ENCODE measurements at regions of chr16 and their contacts with region 1.

Region 1: DNA sequence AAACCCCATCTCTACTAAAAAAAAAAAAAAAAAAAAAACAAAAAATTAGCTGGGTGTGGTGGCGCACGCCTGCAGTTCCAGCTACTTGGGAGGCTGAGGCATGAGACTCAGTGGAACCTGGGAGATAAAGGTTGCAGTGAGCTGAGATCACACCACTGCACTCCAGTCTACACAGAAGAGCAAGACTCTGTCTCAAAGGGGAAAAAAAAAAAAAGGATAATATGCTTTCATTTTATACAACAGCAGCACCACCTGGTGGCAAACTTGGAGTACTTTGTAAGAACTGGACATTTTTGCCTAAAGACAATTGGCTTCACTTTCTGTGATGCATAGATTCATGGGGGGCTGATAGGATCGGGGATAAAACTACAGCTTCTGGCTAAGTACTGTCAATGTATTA is 8.5 kb downstream of the CHTF8 start:
- DNase-seq: peak; percentile 50
- H3K4me3 Mint-ChIP-seq: no peak overlapping the region
- H3K27ac Mint-ChIP-seq: no peak overlapping the region
- H3K4me1 Mint-ChIP-seq: peaks cover 9% of the 10 kb centered on the region
- H3K27me3 Mint-ChIP-seq: no peaks in the 10 kb centered on the region

Region 2: GRCh38 chr16:68902008-68902968 is 221.6 kb before region 1 on chr16:
- intact Hi-C with region 1: loop called (anchors 1 kb)
- DNase-seq: no peak
- H3K4me3 Mint-ChIP-seq: no peak overlapping the region
- H3K27ac Mint-ChIP-seq: no peak overlapping the region
- H3K4me1 Mint-ChIP-seq: no peaks in the 10 kb centered on the region
- H3K27me3 Mint-ChIP-seq: no peaks in the 10 kb centered on the region